ENCODE measurements at regions of chr2 and their contacts with region 1.

Region 1: GRCh38 chr2:112877423-112877822 is 33.5 kb upstream of the IL37 start:
- DNase-seq: no peak
- H3K4me3 ChIP-seq: no peak overlapping the region
- H3K27ac ChIP-seq: no peak overlapping the region
- H3K4me1 ChIP-seq: peaks cover 0 to 15% (median 0%) of the 10 kb centered on the region in 4 donors
- H3K27me3 ChIP-seq: no peaks in the 10 kb centered on the region
- CTCF ChIP-seq: no peak
- EP300 ChIP-seq: no peak
- POLR2A ChIP-seq: no peak

Region 2: DNA sequence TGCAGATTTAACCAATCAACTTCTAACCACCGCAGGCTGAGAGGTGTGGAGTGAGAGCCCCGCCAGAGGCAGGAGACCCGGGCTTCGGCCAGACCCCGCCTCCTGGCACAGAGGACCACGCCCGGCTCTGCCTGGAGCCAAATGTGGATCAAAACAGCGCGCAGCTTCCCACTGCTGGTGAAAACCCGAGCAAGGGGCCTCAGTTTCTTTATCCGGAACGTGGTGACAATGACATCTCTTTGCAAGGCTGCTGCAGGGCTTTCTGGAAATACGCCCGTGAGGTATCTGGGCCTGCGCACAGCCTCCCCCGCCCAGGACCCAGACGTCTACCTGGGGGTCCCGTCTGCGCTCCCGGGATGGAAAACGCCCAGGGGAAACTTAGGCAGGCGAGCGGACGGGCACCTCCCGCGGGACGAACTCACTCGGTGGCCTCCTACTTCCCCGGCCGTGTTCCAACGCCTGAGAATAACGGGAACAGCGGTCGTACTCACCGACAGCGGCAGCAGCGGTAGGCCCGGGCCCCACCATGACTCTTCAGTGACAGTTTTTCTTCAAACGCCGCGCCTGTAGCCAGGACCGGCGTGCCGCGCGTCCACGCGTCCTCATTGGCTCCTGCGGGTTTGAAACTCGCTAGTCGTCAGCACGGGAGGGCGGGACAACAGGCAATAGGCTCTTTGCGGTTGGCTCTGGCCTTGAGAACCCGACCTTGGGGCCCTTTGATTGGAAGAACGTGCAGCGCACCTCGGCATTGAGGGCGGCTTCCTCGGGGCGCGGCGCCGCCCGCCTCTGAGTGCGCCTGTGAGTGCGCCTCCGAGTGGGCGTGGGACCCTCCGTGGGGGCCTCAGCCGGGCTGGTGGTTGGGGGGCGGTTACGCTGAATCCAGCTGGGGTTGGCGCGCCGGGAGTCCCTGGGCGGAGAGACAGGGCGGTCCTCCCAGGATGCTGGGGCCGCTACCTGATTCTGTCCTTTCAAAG is 113.1 kb before region 1 on chr2 and contains the start of gene CKAP2L:
- intact Hi-C with region 1: loop called (anchors 10 kb)
- DNase-seq: peak; percentile 96 to 99
- H3K4me3 ChIP-seq: peak within 1 kb of the TSS; percentile 60 to 93 (median 73)
- H3K27ac ChIP-seq: peak within 1 kb of the TSS; percentile 48 to 78 (median 70)
- H3K4me1 ChIP-seq: peaks cover 8 to 31% (median 14%) of the 10 kb centered on the region in 4 donors
- H3K27me3 ChIP-seq: no peaks in the 10 kb centered on the region
- CTCF ChIP-seq: no peak
- EP300 ChIP-seq: no peak
- POLR2A ChIP-seq: no peak
- total RNA-seq, gene CKAP2L: 1.2 to 4.4 (median 2.0) TPM

Measured in stomach (tissue), 19 donors.